Dendritic cell treated with granulocyte-macrophage colony-stimulating factor and Interleukin-4, amounts not matched to agents 40 ng/mL and 50 ng/mL, for 4 days (primary cell): ENCODE measurements at regions of chrX and their contacts with region 1.

Region 1: DNA sequence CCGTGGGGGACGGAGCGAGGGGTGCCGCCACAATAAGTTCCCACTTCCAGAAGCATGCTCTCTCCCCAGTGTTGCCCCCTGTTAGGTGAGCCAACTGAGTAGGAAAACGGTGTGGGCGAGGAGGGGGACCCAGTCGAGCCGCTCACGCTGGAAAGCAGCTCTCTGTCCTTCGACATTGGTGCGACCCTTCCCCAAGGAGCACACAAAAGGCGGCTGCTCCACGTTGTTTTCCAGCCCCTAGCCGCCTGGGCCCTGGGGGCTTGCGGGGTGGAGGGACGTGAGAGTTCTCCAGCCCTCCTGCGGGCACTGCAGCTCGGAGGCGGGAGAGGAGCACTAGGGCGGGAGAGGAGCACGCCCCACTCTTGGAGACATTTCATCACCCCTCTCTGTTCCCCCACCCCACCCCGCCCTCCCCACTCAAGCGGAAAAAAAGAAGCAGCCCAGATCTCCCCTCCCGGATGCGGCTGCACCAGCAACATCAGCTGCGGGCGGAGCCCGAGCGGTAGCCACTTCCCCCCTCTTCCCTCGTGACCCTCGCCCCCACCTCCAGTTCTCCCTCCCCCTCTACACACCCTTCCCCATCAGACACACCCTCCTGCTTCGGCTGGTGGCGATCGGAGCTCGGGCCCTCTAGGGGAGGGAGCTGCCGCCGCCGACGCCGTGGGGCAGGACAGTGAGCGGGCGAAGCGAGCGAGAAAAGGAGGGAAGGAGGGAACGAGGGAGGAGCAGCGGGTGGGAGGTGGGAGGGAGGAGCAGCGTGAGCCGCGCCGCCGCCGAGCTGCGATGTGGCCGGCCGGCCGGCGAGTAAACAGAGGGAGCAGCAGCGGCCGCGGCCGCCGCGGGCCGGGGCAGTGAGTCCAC is at the start of gene DOCK11:
- H3K4me3 Mint-ChIP-seq: peak within 1 kb of the TSS; percentile 97
- H3K27ac Mint-ChIP-seq: peak within 1 kb of the TSS; percentile 95
- H3K4me1 Mint-ChIP-seq: peaks cover 23% of the 10 kb centered on the region
- H3K27me3 Mint-ChIP-seq: no peaks in the 10 kb centered on the region

Region 2: DNA sequence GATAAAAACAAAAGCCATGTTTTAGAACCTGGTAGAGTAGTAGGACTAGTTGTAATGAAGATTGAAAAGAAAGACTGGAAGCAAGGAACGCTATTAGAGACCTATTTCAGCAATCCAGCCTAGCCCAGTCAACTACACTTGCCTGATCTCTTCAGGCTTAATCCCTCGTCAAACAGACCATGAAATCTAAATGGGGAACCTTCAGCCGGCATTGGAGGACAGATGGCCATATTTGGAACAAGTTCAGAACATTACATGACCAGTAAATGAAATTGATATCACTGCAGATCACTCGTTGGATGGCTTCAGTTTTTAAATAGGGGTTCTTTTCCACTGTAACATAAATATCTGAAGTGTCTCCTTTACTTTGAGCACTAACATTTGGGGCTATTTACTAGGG is 234.1 kb before region 1 on chrX:
- intact Hi-C with region 1: no loop called
- H3K4me3 Mint-ChIP-seq: no peak overlapping the region
- H3K27ac Mint-ChIP-seq: no peak overlapping the region
- H3K4me1 Mint-ChIP-seq: no peaks in the 10 kb centered on the region
- H3K27me3 Mint-ChIP-seq: peaks cover 2% of the 10 kb centered on the region

Region 3: GRCh38 chrX:118536687-118537461 is 41.6 kb after region 1 on chrX:
- intact Hi-C with region 1: loop called (anchors 5 kb)
- H3K4me3 Mint-ChIP-seq: peak overlapping the region; percentile 17
- H3K27ac Mint-ChIP-seq: peak overlapping the region; percentile 76
- H3K4me1 Mint-ChIP-seq: peaks cover 21% of the 10 kb centered on the region
- H3K27me3 Mint-ChIP-seq: no peaks in the 10 kb centered on the region

Region 4: DNA sequence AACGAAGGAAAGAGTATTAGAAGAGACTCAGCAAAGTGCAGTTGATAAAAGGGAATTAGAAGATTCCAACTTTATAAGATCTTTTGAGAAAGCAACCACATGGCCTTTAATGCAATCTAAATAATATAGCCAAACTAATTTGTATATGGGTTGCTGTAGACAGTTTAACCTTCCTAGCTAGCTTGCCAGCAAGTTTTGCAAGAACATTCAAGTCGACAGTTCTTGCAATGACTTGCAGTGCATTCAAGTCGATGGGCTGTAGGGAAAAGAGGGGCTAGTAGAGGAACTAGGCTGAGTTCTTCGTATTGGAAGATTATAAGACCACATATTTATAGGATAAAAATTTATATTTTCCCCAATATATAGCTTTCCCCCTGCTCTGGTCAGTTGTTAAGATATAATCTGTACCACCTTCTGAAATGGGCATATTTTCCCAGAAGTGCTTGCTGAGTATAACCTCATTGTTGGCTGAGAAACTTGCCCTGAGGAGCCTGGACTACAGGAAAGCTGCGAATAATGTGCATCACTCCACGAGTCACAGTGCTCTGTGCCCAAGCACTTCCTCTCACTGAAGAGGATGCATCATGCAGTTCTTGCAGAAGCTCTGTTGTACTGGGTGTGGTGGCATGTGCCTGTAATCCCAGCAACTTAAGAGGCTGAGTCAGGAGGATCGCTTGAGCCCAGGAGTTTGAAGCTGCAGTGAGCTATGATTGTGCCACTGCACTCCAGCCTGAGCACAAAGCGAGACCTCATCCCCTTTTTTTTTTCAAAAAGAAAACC is 57.0 kb after region 1 on chrX:
- intact Hi-C with region 1: loop called (anchors 5 kb)
- H3K4me3 Mint-ChIP-seq: no peak overlapping the region
- H3K27ac Mint-ChIP-seq: peak overlapping the region; percentile 76
- H3K4me1 Mint-ChIP-seq: peaks cover 13% of the 10 kb centered on the region
- H3K27me3 Mint-ChIP-seq: no peaks in the 10 kb centered on the region